CD4-positive, alpha-beta T cell (primary cell): ENCODE measurements at regions of chr1 and their contacts with region 1.

Region 1: GRCh38 chr1:169809370-169810095 is 14.8 kb upstream of the METTL18 start:
- DNase-seq: peak in 5 of 14 experiments; percentile 5 to 67 (median 59)
- ATAC-seq: no peak
- H3K4me3 ChIP-seq: no peak overlapping the region
- H3K4me3 Mint-ChIP-seq: no peak overlapping the region
- H3K27ac ChIP-seq: no peak overlapping the region
- H3K27ac Mint-ChIP-seq: no peak overlapping the region
- H3K4me1 ChIP-seq: no peaks in the 10 kb centered on the region
- H3K4me1 Mint-ChIP-seq: no peaks in the 10 kb centered on the region
- H3K27me3 ChIP-seq: no peaks in the 10 kb centered on the region
- H3K27me3 Mint-ChIP-seq: no peaks in the 10 kb centered on the region
- CTCF ChIP-seq: peak; percentile 79

Region 2: GRCh38 chr1:169466259-169467230 is 343.0 kb before region 1 on chr1:
- CTCF ChIA-PET with region 1: no interaction called
- POLR2A ChIA-PET with region 1: no interaction called
- intact Hi-C with region 1: loop called in 1 of 2 experiments (anchors 1 kb)
- DNase-seq: peak in 5 of 14 experiments; percentile 10 to 53 (median 38)
- ATAC-seq: no peak
- H3K4me3 ChIP-seq: no peak overlapping the region
- H3K4me3 Mint-ChIP-seq: no peak overlapping the region
- H3K27ac ChIP-seq: no peak overlapping the region
- H3K27ac Mint-ChIP-seq: no peak overlapping the region
- H3K4me1 ChIP-seq: no peaks in the 10 kb centered on the region
- H3K4me1 Mint-ChIP-seq: peaks cover 4% of the 10 kb centered on the region
- H3K27me3 ChIP-seq: no peaks in the 10 kb centered on the region
- H3K27me3 Mint-ChIP-seq: no peaks in the 10 kb centered on the region
- CTCF ChIP-seq: peak; percentile 62

Region 3: GRCh38 chr1:169546087-169546995 is 263.2 kb before region 1 on chr1:
- CTCF ChIA-PET with region 1: interaction called, 7 read pairs
- POLR2A ChIA-PET with region 1: no interaction called
- intact Hi-C with region 1: loop called (anchors 1 kb)
- DNase-seq: peak; percentile 22 to 86 (median 33)
- ATAC-seq: peak; percentile 89
- H3K4me3 ChIP-seq: no peak overlapping the region
- H3K4me3 Mint-ChIP-seq: no peak overlapping the region
- H3K27ac ChIP-seq: no peak overlapping the region
- H3K27ac Mint-ChIP-seq: no peak overlapping the region
- H3K4me1 ChIP-seq: no peaks in the 10 kb centered on the region
- H3K4me1 Mint-ChIP-seq: peaks cover 4% of the 10 kb centered on the region
- H3K27me3 ChIP-seq: no peaks in the 10 kb centered on the region
- H3K27me3 Mint-ChIP-seq: no peaks in the 10 kb centered on the region
- CTCF ChIP-seq: peak; percentile 82

Region 4: DNA sequence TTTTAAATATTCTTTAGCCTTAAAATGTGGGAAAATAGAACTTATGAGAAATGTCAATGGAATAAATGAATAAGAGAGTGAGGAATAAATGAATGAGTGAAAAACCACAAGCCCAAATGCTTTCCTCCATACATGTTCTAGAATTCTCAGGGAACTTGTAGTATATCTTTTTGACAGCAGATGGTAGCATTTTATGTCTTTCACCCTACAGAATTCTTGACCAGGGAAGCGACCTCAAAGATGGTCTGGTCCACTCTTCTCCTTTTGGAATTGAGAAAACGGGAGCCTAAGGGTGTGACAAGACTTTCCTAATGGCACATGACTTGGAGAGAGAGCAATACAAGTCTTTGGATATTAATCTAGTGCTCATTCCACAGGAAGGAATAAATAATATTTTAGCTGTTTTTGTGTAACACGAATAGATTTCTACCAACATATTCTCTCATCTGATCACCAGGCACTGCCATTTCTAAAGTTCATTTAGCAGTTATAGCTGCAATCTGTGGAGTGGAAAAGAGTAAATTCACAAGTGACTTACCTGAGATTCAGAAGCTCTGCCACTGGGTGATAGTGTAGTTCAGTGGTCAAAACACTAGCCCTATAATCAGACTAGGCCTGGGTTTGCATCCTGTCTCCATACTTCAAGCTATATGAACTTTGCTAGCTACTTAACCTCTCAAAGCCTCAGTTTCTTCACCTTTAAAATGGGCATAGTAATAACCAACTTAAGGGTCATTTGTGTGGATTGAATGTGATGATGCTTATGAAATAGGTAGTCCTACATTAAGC is 208.2 kb before region 1 on chr1:
- CTCF ChIA-PET with region 1: no interaction called
- POLR2A ChIA-PET with region 1: no interaction called
- intact Hi-C with region 1: loop called in 1 of 2 experiments (anchors 2 kb)
- DNase-seq: peak in 3 of 14 experiments; percentile 49 to 59 (median 57)
- ATAC-seq: no peak
- H3K4me3 ChIP-seq: no peak overlapping the region
- H3K4me3 Mint-ChIP-seq: peak overlapping the region; percentile 7
- H3K27ac ChIP-seq: peak overlapping the region in 1 of 2 donors; percentile 9
- H3K27ac Mint-ChIP-seq: peak overlapping the region; percentile 77
- H3K4me1 ChIP-seq: peaks cover 40% of the 10 kb centered on the region
- H3K4me1 Mint-ChIP-seq: peaks cover 55% of the 10 kb centered on the region
- H3K27me3 ChIP-seq: no peaks in the 10 kb centered on the region
- H3K27me3 Mint-ChIP-seq: no peaks in the 10 kb centered on the region
- CTCF ChIP-seq: peak; percentile 84

Region 5: DNA sequence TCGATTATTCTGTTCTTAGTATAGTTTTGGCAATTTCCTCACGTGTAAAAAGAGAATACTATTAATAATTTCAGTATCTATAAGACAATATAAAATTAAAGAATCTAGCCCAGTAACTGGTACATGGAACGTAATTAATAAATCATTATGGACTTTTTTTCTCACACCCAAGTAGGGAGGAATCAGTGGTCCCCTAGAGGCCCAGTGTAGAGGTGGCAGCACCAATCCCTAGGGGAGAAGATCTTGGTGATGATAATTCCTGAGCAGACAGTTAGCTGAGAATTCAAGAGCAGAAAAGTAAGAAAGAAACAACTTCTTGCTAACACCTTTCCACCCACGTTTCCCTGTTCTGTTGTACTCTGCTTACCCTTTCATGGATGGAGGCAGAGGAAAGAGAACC is 56.0 kb before region 1 on chr1:
- CTCF ChIA-PET with region 1: no interaction called
- POLR2A ChIA-PET with region 1: no interaction called
- intact Hi-C with region 1: no loop called
- DNase-seq: no peak
- ATAC-seq: no peak
- H3K4me3 ChIP-seq: no peak overlapping the region
- H3K4me3 Mint-ChIP-seq: no peak overlapping the region
- H3K27ac ChIP-seq: no peak overlapping the region
- H3K27ac Mint-ChIP-seq: no peak overlapping the region
- H3K4me1 ChIP-seq: no peaks in the 10 kb centered on the region
- H3K4me1 Mint-ChIP-seq: no peaks in the 10 kb centered on the region
- H3K27me3 ChIP-seq: no peaks in the 10 kb centered on the region
- H3K27me3 Mint-ChIP-seq: no peaks in the 10 kb centered on the region
- CTCF ChIP-seq: no peak